CD4-positive, alpha-beta memory T cell (primary cell): ENCODE measurements at regions of chr17 and their contacts with region 1.

Region 1: GRCh38 chr17:53492532-53492931 is 330.2 kb upstream of the KIF2B start:
- DNase-seq: no peak
- H3K4me3 ChIP-seq: no peak overlapping the region
- H3K4me3 Mint-ChIP-seq: no peak overlapping the region
- H3K27ac ChIP-seq: no peak overlapping the region
- H3K27ac Mint-ChIP-seq: no peak overlapping the region
- H3K4me1 ChIP-seq: no peaks in the 10 kb centered on the region
- H3K4me1 Mint-ChIP-seq: no peaks in the 10 kb centered on the region
- H3K27me3 ChIP-seq: no peaks in the 10 kb centered on the region
- H3K27me3 Mint-ChIP-seq: no peaks in the 10 kb centered on the region

Region 2: GRCh38 chr17:53420035-53420641 is 72.4 kb before region 1 on chr17:
- CTCF ChIA-PET with region 1: no interaction called
- POLR2A ChIA-PET with region 1: no interaction called
- intact Hi-C with region 1: loop called (anchors 2 kb)
- DNase-seq: no peak
- H3K4me3 ChIP-seq: no peak overlapping the region
- H3K4me3 Mint-ChIP-seq: no peak overlapping the region
- H3K27ac ChIP-seq: no peak overlapping the region
- H3K27ac Mint-ChIP-seq: no peak overlapping the region
- H3K4me1 ChIP-seq: no peaks in the 10 kb centered on the region
- H3K4me1 Mint-ChIP-seq: no peaks in the 10 kb centered on the region
- H3K27me3 ChIP-seq: no peaks in the 10 kb centered on the region
- H3K27me3 Mint-ChIP-seq: no peaks in the 10 kb centered on the region